ENCODE measurements at regions of chr7 and their contacts with region 1.

Region 1: GRCh38 chr7:135710417-135711138 is 17.4 kb downstream of the SLC13A4 start:
- DNase-seq: no peak
- H3K4me3 Mint-ChIP-seq: no peak overlapping the region
- H3K27ac Mint-ChIP-seq: no peak overlapping the region
- H3K4me1 Mint-ChIP-seq: no peaks in the 10 kb centered on the region
- H3K27me3 Mint-ChIP-seq: no peaks in the 10 kb centered on the region

Region 2: DNA sequence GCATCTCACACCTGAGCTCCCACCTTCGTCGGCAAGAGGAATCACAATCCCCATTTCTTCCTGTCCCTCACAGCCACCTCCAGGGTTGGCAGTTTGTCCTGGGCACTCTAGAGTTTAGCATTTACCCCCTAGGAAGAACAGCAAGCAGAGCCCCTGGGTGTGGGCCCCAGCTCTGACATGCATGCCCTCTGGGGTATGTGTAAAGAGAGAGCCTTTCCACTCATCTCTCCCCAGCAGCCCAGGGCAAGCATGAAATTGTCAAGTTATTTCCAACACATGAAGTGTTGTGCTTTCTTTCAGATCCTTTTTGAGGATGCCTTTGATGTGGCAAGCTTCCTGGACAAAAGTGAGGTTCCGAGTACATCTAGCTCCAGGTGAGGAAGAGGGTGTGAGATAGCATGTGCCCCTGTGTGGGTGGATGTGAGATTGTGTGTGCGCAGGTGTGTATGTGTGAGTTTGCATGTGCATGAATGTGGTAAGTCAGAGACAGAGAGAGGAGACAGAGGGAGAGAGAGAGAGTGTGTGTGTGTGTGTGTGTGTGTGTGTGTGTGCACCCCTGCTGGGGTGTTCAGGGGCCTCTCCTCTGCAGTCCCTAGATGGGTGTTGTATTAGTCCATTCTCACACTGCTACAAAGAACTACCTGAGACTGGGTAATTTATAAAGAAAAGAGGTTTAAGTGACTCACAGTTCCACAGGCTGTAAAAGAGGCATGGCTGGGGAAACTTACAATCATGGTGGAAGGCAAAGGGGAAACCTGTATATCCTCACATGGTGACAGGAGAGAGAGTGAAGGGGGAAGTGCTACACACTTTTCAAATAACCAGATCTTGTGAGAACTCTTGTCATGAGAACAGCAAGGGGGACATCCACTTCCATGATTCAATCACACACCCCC is 458.8 kb before region 1 on chr7:
- intact Hi-C with region 1: no loop called
- DNase-seq: no peak
- H3K4me3 Mint-ChIP-seq: no peak overlapping the region
- H3K27ac Mint-ChIP-seq: no peak overlapping the region
- H3K4me1 Mint-ChIP-seq: peaks cover 5% of the 10 kb centered on the region
- H3K27me3 Mint-ChIP-seq: no peaks in the 10 kb centered on the region

Region 3: GRCh38 chr7:135601182-135601581 is 109.4 kb before region 1 on chr7:
- intact Hi-C with region 1: no loop called
- DNase-seq: no peak
- H3K4me3 Mint-ChIP-seq: no peak overlapping the region
- H3K27ac Mint-ChIP-seq: no peak overlapping the region
- H3K4me1 Mint-ChIP-seq: no peaks in the 10 kb centered on the region
- H3K27me3 Mint-ChIP-seq: no peaks in the 10 kb centered on the region

Region 4: GRCh38 chr7:135672560-135673359 is 37.8 kb before region 1 on chr7:
- intact Hi-C with region 1: loop called (anchors 2 kb)
- DNase-seq: no peak
- H3K4me3 Mint-ChIP-seq: no peak overlapping the region
- H3K27ac Mint-ChIP-seq: no peak overlapping the region
- H3K4me1 Mint-ChIP-seq: peaks cover 10% of the 10 kb centered on the region
- H3K27me3 Mint-ChIP-seq: peaks cover 2% of the 10 kb centered on the region